ENCODE measurements at regions of chr11 and their contacts with region 1.

Region 1: GRCh38 chr11:68199295-68199987 is 13.7 kb downstream of the KMT5B start:
- DNase-seq: no peak
- ATAC-seq: no peak
- H3K4me3 Mint-ChIP-seq: no peak overlapping the region
- H3K27ac Mint-ChIP-seq: no peak overlapping the region
- H3K4me1 Mint-ChIP-seq: peaks cover 71% of the 10 kb centered on the region
- H3K27me3 Mint-ChIP-seq: no peaks in the 10 kb centered on the region
- CTCF ChIP-seq: no peak

Region 2: DNA sequence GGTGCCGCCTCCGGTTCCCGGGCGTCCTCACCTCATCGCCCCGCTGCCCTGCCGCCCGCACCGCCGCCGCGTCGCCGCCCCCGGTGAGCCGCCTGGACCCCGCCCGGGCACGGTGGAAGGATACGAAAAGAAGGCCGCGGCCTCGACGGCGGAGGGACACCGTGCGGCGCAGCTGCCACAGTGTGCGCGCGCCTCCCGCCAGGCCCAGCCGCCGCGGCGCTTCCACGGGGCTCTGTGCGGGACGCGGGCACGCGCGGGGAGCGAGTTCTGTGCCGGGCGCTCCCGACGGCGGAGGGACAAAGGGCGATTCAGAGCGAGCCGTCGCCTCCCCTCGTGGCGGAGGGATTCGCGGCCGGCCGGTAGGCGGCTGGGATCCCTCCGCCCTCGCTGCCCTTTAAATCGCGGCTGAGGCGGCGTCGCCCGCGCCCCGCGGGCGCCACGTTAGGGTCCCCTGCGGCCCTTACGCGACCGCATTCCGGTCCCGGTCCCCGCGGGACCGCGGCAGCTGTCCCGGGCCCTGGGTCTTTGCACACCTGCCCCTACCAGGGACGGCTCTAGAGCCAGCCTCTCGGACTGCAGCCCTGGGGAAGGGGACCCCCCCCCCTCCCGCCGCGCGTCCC is 14.2 kb after region 1 on chr11:
- CTCF ChIA-PET with region 1: interaction called, 10 read pairs
- POLR2A ChIA-PET with region 1: interaction called, 3 read pairs
- intact Hi-C with region 1: no loop called
- DNase-seq: peak; percentile 78
- ATAC-seq: peak; percentile 53
- H3K4me3 Mint-ChIP-seq: peak overlapping the region; percentile 55
- H3K27ac Mint-ChIP-seq: no peak overlapping the region
- H3K4me1 Mint-ChIP-seq: peaks cover 41% of the 10 kb centered on the region
- H3K27me3 Mint-ChIP-seq: peaks cover 9% of the 10 kb centered on the region
- CTCF ChIP-seq: no peak